ENCODE measurements at regions of chr22 and their contacts with region 1.

Region 1: DNA sequence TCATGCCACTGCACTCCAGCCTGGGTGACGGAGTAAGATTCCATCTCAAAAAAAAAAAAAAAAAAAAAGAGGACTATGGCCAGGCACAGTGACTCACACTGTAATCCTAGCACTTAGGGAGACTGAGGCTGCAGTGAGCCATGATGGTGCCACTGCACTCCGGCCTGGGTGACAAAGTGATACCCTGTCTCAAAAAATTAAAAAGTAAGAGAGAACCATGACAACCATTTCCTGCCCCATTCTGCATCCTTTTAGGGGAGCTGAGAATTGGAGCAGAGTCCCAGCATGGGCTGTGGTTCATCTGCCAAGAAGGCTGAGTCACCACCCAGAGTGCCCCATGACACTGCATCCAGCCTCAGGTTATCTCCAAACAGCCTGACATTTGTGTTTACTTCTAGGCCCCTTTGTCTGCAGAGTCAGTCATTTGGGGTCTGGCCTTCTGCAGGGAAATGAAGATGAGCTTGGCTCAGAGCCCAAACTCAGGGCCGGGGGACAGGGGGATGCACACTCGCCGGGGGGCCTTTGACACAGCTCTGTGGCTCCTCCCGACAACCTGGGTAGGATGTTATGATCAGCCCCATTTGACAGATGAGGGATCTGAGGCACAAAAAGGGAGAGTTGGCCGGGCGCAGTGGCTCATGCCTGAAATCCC is 4.7 kb downstream of the CSDC2 start:
- DNase-seq: peak; percentile 71 to 73
- H3K4me3 ChIP-seq: no peak overlapping the region
- H3K27ac ChIP-seq: peak overlapping the region; percentile 43
- H3K4me1 ChIP-seq: peaks cover 38% of the 10 kb centered on the region
- H3K27me3 ChIP-seq: no peaks in the 10 kb centered on the region
- CTCF ChIP-seq: no peak

Region 2: GRCh38 chr22:41387341-41387740 is 178.2 kb before region 1 on chr22:
- CTCF ChIA-PET with region 1: no interaction called
- POLR2A ChIA-PET with region 1: interaction called, 12 read pairs
- intact Hi-C with region 1: no loop called
- DNase-seq: no peak
- H3K4me3 ChIP-seq: no peak overlapping the region
- H3K27ac ChIP-seq: no peak overlapping the region
- H3K4me1 ChIP-seq: peaks cover 8% of the 10 kb centered on the region; the same call in 1 of the 2 replicates
- H3K27me3 ChIP-seq: no peaks in the 10 kb centered on the region
- CTCF ChIP-seq: no peak